ENCODE measurements at regions of chr2 and their contacts with region 1.

Region 1: DNA sequence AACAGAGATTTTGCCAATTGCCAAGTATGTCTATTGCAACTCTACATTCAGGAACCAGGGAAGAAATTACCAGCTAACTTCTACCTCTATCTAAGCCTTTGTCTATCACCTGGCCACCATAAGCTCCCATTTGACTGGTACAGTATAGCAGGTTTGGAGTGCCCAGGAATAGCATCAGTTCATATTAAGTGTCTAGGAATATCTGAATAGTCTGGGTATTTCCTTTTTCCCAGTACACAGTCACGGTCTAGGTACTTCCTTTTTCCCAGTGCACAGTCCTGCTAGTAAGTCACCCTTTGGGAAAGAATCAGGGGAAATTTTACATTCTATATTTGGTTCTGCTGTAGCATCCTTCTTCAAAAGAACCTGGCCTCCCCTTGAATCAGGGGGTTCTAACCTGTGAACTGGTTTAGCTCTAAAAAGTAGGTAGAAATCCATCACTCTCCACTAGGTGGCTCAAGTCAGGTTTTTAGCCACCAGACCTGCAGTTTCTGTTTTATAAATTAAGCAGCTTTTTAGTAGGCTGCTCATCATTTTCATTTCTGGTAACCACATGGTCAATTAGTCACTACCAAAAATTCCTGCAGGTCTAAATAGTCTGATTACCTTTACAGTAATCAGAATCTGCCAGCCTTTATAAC is 49.3 kb upstream of the DNAJC10 start:
- DNase-seq: no peak

Region 2: GRCh38 chr2:182705761-182706160 is 39.0 kb after region 1 on chr2:
- intact Hi-C with region 1: loop called in 1 of 2 experiments (anchors 1 kb)
- DNase-seq: no peak

Measured in posterior vena cava (tissue), 2 donors.